ENCODE measurements at regions of chr12 and their contacts with region 1.

Region 1: DNA sequence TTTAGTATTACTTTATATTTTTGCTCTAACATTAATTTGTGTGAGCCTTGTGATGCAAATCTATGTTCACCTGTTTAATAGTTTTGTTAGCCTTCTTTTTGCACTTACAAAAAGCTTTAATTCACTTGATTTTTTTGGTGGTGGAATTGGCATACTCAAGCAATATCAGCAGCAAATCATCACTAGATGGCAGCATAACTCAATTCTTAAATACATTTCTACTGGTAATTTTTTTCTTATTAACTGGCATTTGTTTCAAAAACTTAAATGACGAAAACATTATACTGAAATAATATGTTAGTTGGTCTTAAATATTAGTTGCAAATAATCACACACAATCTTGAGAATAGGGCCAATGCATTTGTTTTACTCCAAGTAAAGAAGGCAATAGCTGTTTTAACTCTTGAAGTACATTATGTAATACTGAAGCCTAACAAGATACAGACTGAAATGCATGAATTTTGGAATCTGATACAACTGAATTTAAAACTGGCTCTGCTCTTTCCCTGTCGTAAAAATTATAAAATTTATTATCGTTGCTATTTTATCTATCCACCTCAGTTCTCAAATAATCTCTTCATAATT is 151.5 kb downstream of the ATXN7L3B start:
- DNase-seq: peak in 1 of 2 experiments; percentile 37
- H3K4me3 ChIP-seq: no peak overlapping the region
- H3K27ac ChIP-seq: no peak overlapping the region
- H3K4me1 ChIP-seq: no peaks in the 10 kb centered on the region
- H3K27me3 ChIP-seq: no peaks in the 10 kb centered on the region
- CTCF ChIP-seq: peak; percentile 77

Region 2: GRCh38 chr12:75058228-75058627 is 369.1 kb after region 1 on chr12:
- CTCF ChIA-PET with region 1: interaction called, 5 read pairs
- POLR2A ChIA-PET with region 1: no interaction called
- intact Hi-C with region 1: loop called (anchors 5 kb)
- DNase-seq: no peak
- H3K4me3 ChIP-seq: no peak overlapping the region
- H3K27ac ChIP-seq: no peak overlapping the region
- H3K4me1 ChIP-seq: no peaks in the 10 kb centered on the region
- H3K27me3 ChIP-seq: no peaks in the 10 kb centered on the region
- CTCF ChIP-seq: peak; percentile 30

Region 3: DNA sequence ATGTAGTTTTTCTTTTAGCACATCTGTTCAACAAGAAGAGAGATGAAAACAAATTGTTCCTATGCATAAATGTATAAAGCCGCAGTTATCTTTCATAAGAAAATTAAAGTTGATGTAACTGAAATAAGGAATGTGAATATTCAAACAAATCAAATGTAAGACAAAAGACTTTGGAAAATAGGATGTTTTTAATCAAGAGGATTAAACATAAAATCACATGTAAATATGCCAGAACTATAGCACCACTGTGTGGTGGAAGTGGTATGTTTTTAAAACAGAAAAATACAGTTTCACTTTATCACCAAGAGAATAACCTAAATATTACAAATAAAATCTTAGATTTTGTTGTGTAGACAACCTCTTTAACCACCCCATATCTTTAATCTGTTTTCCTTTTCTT is 600.6 kb after region 1 on chr12:
- CTCF ChIA-PET with region 1: no interaction called
- POLR2A ChIA-PET with region 1: no interaction called
- intact Hi-C with region 1: loop called (anchors 1 kb)
- DNase-seq: no peak
- H3K4me3 ChIP-seq: no peak overlapping the region
- H3K27ac ChIP-seq: no peak overlapping the region
- H3K4me1 ChIP-seq: no peaks in the 10 kb centered on the region
- H3K27me3 ChIP-seq: no peaks in the 10 kb centered on the region
- CTCF ChIP-seq: peak; percentile 62

Region 4: DNA sequence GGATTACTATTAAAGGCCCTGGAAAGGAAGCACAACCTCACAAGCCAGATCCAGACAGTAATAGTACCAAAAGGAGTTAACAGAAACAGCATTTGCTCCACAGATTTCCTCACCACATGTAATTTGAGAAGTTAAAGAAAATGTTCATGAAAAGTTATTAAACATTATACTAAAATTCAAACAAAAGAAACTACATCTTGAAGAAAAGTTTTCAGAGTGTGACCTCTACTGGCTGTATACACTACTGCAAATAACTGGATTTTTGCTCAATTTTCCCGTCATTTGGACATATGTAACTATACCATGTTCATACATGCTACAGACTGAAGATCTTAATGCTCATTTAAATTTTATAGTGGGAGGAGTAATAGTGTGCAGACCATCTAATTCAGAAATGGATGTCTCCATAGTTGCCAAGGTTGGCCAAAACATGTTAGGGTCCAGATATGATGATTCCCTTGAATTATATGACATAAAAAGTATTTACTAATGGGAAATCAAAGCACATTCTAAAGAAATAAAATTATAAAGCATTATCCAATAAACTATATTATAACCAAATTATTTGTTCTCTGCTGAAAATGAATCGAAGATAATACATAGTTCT is 816.6 kb after region 1 on chr12:
- CTCF ChIA-PET with region 1: no interaction called
- POLR2A ChIA-PET with region 1: no interaction called
- intact Hi-C with region 1: loop called (anchors 1 kb)
- DNase-seq: no peak
- H3K4me3 ChIP-seq: no peak overlapping the region
- H3K27ac ChIP-seq: no peak overlapping the region
- H3K4me1 ChIP-seq: peaks cover 14% of the 10 kb centered on the region
- H3K27me3 ChIP-seq: no peaks in the 10 kb centered on the region
- CTCF ChIP-seq: peak; percentile 80